Activated T-helper 2 cell treated with anti-CD3 and anti-CD28 coated beads, Interferon-gamma antibody, Interleukin-2, Interleukin-4, amounts not matched to agents 10 μg/mL and 5 μg/mL and 100 μg/mL, durations not matched to agents 14 hours and 24 hours and 36 hours (primary cell): ENCODE measurements at regions of chr7 and their contacts with region 1.

Region 1: GRCh38 chr7:43096875-43097274 is 15.6 kb upstream of the HECW1 start:
- DNase-seq: no peak
- H3K4me3 Mint-ChIP-seq: no peak overlapping the region
- H3K27ac Mint-ChIP-seq: no peak overlapping the region
- H3K4me1 Mint-ChIP-seq: no peaks in the 10 kb centered on the region
- H3K27me3 Mint-ChIP-seq: peaks cover 7% of the 10 kb centered on the region

Region 2: GRCh38 chr7:42720876-42721796 is 375.7 kb before region 1 on chr7:
- intact Hi-C with region 1: no loop called
- DNase-seq: no peak
- H3K4me3 Mint-ChIP-seq: no peak overlapping the region
- H3K27ac Mint-ChIP-seq: no peak overlapping the region
- H3K4me1 Mint-ChIP-seq: no peaks in the 10 kb centered on the region
- H3K27me3 Mint-ChIP-seq: no peaks in the 10 kb centered on the region

Region 3: DNA sequence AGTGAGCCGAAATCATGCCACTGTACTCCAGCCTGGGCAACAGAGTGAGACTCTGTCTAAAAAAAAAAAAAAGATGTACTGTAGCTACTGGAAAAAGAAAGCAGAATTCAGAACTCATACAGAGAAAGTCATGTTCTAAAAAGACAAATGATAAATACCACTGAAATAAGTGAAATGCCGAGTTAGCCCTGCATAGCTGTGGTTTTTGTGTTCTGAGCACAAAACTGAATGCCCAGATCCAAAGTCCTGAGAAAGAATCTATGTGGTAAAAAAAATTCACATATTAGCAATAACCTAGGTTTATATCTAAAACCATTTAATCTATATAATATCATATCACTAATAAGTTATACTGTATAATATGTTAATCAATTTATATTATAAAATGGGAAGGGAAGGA is 13.8 kb before region 1 on chr7:
- intact Hi-C with region 1: no loop called
- DNase-seq: no peak
- H3K4me3 Mint-ChIP-seq: no peak overlapping the region
- H3K27ac Mint-ChIP-seq: no peak overlapping the region
- H3K4me1 Mint-ChIP-seq: no peaks in the 10 kb centered on the region
- H3K27me3 Mint-ChIP-seq: peaks cover 34% of the 10 kb centered on the region

Region 4: GRCh38 chr7:43164757-43165156 is 67.9 kb after region 1 on chr7:
- intact Hi-C with region 1: loop called (anchors 2 kb)
- DNase-seq: no peak
- H3K4me3 Mint-ChIP-seq: no peak overlapping the region
- H3K27ac Mint-ChIP-seq: no peak overlapping the region
- H3K4me1 Mint-ChIP-seq: no peaks in the 10 kb centered on the region
- H3K27me3 Mint-ChIP-seq: peaks cover 4% of the 10 kb centered on the region